Body of pancreas (tissue), 4 donors: ENCODE measurements at regions of chr21 and their contacts with region 1.

Region 1: GRCh38 chr21:31098576-31099005 is 60.3 kb upstream of the KRTAP19-8 start:
- DNase-seq: peak; percentile 66 to 73 (median 68)
- ATAC-seq: peak; percentile 65
- H3K4me3 ChIP-seq: no peak overlapping the region
- H3K27ac ChIP-seq: no peak overlapping the region
- H3K4me1 ChIP-seq: no peaks in the 10 kb centered on the region
- H3K27me3 ChIP-seq: no peaks in the 10 kb centered on the region
- CTCF ChIP-seq: peak; percentile 53 to 86 (median 79)
- POLR2A ChIP-seq: no peak

Region 2: DNA sequence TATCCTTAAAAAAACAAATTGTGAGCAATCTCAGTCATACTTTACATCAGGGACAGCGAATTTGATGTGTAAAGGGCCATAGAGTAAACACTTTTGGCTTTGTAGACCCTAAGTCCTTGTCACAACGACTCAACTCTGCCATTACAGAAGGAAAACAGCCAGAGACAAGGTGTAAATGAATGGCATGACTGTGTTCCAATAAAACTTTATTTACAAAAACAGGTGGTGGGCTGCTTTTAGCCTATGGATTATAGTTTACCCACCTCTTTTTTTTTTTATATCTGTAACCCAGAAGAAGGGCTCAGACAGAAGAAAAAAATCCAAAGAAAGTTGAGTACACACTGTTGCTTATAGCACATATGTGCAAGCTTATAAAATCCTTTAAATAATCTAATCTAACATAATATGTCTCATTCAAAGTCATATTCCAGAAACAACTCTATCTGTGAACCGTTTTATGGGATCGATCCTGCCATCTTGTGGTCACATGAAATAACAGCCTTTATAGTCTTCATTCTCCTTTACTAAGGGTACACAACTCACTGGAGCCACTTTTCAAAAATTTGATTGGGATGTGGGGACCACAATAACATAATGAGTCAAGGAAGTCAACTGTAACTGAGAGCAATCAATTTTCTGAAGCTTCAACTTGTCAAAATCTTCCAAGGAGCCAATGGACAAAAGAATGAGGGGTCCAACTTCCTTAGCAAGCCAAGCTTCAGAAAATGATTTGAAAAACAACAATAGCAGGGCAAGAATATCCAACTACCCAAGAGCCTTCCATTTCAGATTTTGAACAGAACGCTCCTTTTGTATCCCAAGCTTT is 81.9 kb after region 1 on chr21:
- intact Hi-C with region 1: loop called (anchors 5 kb)
- DNase-seq: peak in 1 of 4 donors; percentile 33
- ATAC-seq: no peak
- H3K4me3 ChIP-seq: no peak overlapping the region
- H3K27ac ChIP-seq: no peak overlapping the region
- H3K4me1 ChIP-seq: no peaks in the 10 kb centered on the region
- H3K27me3 ChIP-seq: peaks cover 0 to 3% of the 10 kb centered on the region in 2 donors
- CTCF ChIP-seq: peak in 6 of 7 experiments; percentile 38 to 49 (median 44)
- POLR2A ChIP-seq: no peak

Region 3: GRCh38 chr21:31945546-31945945 is 847.0 kb after region 1 on chr21:
- intact Hi-C with region 1: no loop called
- DNase-seq: peak in 1 of 4 donors; percentile 19
- ATAC-seq: no peak
- H3K4me3 ChIP-seq: no peak overlapping the region
- H3K27ac ChIP-seq: no peak overlapping the region
- H3K4me1 ChIP-seq: peaks cover under 1% of the 10 kb centered on the region
- H3K27me3 ChIP-seq: no peaks in the 10 kb centered on the region
- CTCF ChIP-seq: no peak
- POLR2A ChIP-seq: no peak